ENCODE measurements at regions of chrX and their contacts with region 1.

Region 1: GRCh38 chrX:73262992-73263391 is 48.3 kb upstream of the NAP1L2 start:
- DNase-seq: peak in 3 of 14 experiments; percentile 23 to 26 (median 24)
- ATAC-seq: no peak
- H3K4me3 ChIP-seq: no peak overlapping the region
- H3K4me3 Mint-ChIP-seq: no peak overlapping the region
- H3K27ac ChIP-seq: no peak overlapping the region
- H3K27ac Mint-ChIP-seq: no peak overlapping the region
- H3K4me1 ChIP-seq: no peaks in the 10 kb centered on the region
- H3K4me1 Mint-ChIP-seq: no peaks in the 10 kb centered on the region
- H3K27me3 ChIP-seq: no peaks in the 10 kb centered on the region
- H3K27me3 Mint-ChIP-seq: peaks cover 15% of the 10 kb centered on the region
- CTCF ChIP-seq: no peak

Region 2: DNA sequence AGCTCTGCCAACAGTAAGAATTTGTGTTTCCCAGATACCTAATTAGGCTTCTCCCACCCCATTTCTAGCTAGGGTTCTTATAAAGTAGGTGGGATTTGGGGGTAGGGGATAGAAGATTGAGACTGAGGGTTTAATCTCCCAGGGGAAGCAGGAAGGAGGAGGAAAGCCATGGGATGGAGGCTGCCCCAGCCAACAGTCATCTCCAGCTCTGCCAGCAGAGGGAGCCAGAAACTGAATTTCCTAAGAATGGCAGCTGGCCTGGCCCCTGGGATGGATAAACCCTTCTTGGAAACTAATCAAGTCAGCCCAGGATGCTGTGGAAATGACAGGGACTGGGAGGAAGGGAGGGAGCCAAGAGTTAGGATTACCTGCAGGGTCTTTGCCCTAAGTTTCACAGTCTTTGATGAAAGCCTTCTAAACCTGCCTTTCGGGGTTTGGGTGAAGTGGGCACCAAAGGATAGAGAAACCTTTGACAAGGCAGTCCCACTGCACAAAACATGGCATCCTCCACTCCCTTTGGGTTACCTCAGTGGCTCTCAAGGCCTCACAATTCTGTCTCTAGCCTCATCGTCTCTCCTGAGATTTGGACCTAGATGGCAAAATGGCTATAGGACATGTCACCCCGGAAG is 1017.4 kb before region 1 on chrX:
- CTCF ChIA-PET with region 1: no interaction called
- POLR2A ChIA-PET with region 1: no interaction called
- intact Hi-C with region 1: loop called in 1 of 2 experiments (anchors 5 kb)
- DNase-seq: peak in 12 of 14 experiments; percentile 4 to 64 (median 28)
- ATAC-seq: no peak
- H3K4me3 ChIP-seq: no peak overlapping the region
- H3K4me3 Mint-ChIP-seq: no peak overlapping the region
- H3K27ac ChIP-seq: no peak overlapping the region
- H3K27ac Mint-ChIP-seq: no peak overlapping the region
- H3K4me1 ChIP-seq: no peaks in the 10 kb centered on the region
- H3K4me1 Mint-ChIP-seq: no peaks in the 10 kb centered on the region
- H3K27me3 ChIP-seq: no peaks in the 10 kb centered on the region
- H3K27me3 Mint-ChIP-seq: peaks cover 3% of the 10 kb centered on the region
- CTCF ChIP-seq: peak; percentile 69

Region 3: GRCh38 chrX:73577368-73577767 is 314.4 kb after region 1 on chrX:
- CTCF ChIA-PET with region 1: no interaction called
- POLR2A ChIA-PET with region 1: no interaction called
- intact Hi-C with region 1: no loop called
- DNase-seq: no peak
- ATAC-seq: no peak
- H3K4me3 ChIP-seq: no peak overlapping the region
- H3K4me3 Mint-ChIP-seq: no peak overlapping the region
- H3K27ac ChIP-seq: no peak overlapping the region
- H3K27ac Mint-ChIP-seq: no peak overlapping the region
- H3K4me1 ChIP-seq: no peaks in the 10 kb centered on the region
- H3K4me1 Mint-ChIP-seq: peaks cover 49% of the 10 kb centered on the region
- H3K27me3 ChIP-seq: no peaks in the 10 kb centered on the region
- H3K27me3 Mint-ChIP-seq: no peaks in the 10 kb centered on the region
- CTCF ChIP-seq: no peak